ENCODE measurements at regions of chr1 and their contacts with region 1.

Region 1: DNA sequence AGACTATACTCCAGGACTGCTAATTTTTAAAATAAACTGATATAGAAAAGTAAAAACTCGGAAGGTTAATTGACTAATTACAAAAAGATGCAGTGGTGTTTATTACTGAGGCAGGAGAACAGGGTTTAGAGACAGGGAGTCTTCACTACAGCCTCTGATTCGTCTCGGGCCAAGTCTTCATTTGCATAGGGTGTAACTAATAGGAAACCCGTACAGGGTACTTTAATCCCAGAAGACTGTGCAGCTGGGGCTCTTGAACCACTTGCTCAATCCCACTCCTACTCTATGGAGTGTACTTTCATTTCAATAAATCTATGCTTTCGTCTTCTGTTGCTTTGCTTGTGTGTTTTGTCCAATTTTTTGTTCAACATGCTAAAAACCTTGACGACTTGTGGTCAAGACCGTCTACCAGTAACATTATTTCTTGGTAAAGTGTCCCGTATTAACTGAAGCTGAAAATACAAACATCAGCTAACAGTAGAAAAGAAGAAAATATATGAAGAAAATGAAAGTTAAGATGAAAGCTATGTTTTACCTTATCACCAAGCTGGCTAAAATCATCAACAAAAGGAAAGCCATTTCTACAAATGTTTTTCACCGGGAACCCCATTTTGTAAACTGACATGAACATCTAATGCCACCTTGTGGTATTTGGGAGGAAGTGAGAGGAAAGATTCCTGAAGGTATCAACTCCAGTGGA is 8.0 kb downstream of the SDHB start:
- DNase-seq: peak; percentile 44
- H3K4me3 ChIP-seq: no peak overlapping the region
- H3K27ac ChIP-seq: no peak overlapping the region
- H3K27me3 ChIP-seq: no peaks in the 10 kb centered on the region
- CTCF ChIP-seq: peak; percentile 79

Region 2: DNA sequence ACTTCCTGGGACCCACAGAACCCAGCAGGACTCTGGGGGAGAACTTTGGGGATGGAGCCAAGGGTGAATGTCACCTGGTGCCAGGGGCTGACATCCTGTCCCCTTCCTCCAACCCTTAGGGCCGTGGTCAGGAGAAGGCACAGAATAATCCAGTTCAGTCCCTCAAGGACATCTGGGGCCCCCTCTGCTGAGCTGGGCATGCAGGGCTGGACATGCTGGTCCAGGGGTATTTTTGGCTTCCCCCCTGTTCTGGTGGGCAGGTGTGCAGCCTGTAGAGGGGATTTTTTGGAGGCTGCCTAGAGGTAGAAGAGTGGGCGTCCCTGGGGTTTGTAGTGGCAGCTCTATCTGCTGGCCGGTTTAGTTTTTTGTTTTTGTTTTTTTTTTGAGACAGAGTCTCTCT is 127.4 kb before region 1 on chr1:
- CTCF ChIA-PET with region 1: interaction called, 10 read pairs
- POLR2A ChIA-PET with region 1: no interaction called
- DNase-seq: no peak
- H3K4me3 ChIP-seq: no peak overlapping the region
- H3K27ac ChIP-seq: no peak overlapping the region
- H3K27me3 ChIP-seq: no peaks in the 10 kb centered on the region
- CTCF ChIP-seq: no peak

Region 3: GRCh38 chr1:16955186-16955585 is 90.6 kb before region 1 on chr1:
- CTCF ChIA-PET with region 1: interaction called, 126 read pairs
- POLR2A ChIA-PET with region 1: no interaction called
- DNase-seq: no peak
- H3K4me3 ChIP-seq: no peak overlapping the region
- H3K27ac ChIP-seq: no peak overlapping the region
- H3K27me3 ChIP-seq: no peaks in the 10 kb centered on the region
- CTCF ChIP-seq: no peak

Region 4: DNA sequence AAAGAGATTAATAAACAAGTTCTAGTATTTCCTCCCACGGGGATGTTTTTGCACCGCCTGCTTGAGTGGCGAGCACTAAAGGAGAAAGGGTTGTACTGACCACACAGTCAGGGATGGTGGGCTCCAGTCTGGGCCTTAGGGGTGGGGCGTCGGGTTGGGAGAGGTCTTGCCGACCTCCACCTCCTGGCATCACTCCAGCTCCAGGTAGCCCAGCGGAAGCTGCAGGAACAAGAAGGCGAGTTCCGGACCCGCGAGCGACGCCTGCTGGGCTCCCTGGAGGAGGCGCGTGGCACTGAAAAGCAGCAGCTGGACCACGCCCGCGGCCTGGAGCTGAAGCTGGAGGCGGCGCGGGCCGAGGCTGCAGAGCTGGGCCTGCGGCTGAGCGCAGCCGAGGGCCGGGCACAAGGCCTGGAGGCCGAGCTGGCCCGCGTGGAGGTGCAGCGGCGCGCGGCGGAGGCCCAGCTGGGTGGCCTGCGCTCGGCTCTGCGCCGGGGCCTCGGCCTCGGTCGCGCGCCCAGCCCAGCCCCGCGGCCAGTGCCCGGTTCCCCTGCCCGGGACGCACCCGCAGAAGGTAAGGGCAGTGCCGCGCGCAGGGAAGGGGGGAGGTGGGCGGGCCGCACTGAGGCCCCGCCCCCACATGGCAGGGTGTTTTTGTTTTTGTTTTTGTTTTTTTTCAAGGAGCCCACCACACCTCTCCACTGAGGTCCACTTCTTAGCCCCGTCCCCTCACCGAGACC is 85.1 kb before region 1 on chr1:
- CTCF ChIA-PET with region 1: interaction called, 37 read pairs
- POLR2A ChIA-PET with region 1: no interaction called
- DNase-seq: no peak
- H3K4me3 ChIP-seq: peak overlapping the region; percentile 40
- H3K27ac ChIP-seq: no peak overlapping the region
- H3K27me3 ChIP-seq: no peaks in the 10 kb centered on the region
- CTCF ChIP-seq: peak; percentile 77

Region 5: DNA sequence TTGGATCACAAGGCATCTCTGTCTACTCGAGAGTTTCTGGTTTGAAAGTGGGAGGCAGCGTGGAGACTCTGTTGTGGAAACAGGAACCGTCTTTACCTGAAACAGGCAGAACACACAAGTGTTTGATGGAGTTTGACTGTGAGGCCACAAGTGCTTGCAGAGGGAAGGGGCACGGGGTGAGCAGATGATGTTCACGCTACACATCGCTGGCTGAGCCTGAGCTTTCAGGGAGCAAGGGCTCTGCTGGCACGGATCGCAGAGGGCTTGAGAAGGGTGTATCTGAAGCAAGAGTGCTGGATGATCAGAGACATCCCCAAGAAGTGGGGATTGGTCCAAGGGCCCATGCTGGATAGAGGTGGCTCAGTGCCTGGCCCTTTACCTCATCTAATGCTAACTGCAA is 1121.1 kb after region 1 on chr1:
- CTCF ChIA-PET with region 1: no interaction called
- POLR2A ChIA-PET with region 1: no interaction called
- DNase-seq: no peak
- H3K4me3 ChIP-seq: no peak overlapping the region
- H3K27ac ChIP-seq: no peak overlapping the region
- H3K27me3 ChIP-seq: no peaks in the 10 kb centered on the region
- CTCF ChIP-seq: no peak

Measured in AG04450 (cell line).